ENCODE measurements at regions of chr17 and their contacts with region 1.

Region 1: DNA sequence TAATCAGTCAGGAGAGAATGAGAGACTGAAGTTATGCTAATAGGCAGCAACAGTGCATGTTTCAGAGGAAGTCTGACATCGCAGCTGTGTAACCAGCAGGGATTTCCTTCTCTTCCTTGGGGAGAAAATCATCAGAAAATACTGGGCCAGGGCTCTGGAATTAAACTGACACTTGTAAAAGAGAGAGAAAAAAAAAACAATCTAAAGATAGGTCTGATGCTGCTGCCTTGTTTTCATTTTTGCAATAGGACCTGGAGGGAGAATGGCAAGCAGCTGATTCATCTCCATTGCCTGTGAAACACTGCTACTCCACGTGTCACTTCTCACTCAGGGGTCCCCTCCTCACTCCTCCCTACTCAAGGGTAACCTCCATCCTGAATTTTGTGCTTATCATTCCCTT is 17.7 kb upstream of the CORO6 start:
- DNase-seq: peak; percentile 82
- H3K4me3 ChIP-seq: no peak overlapping the region
- H3K27ac ChIP-seq: peak overlapping the region; percentile 67
- H3K4me1 ChIP-seq: peaks cover 62% of the 10 kb centered on the region
- H3K27me3 ChIP-seq: no peaks in the 10 kb centered on the region
- CTCF ChIP-seq: no peak

Region 2: GRCh38 chr17:29326023-29326813 is 314.2 kb before region 1 on chr17:
- CTCF ChIA-PET with region 1: no interaction called
- POLR2A ChIA-PET with region 1: interaction called, 14 read pairs
- intact Hi-C with region 1: no loop called
- DNase-seq: no peak
- H3K4me3 ChIP-seq: no peak overlapping the region
- H3K27ac ChIP-seq: no peak overlapping the region
- H3K4me1 ChIP-seq: no peaks in the 10 kb centered on the region
- H3K27me3 ChIP-seq: no peaks in the 10 kb centered on the region
- CTCF ChIP-seq: no peak

Region 3: GRCh38 chr17:29611311-29612053 is 28.9 kb before region 1 on chr17:
- CTCF ChIA-PET with region 1: no interaction called
- POLR2A ChIA-PET with region 1: no interaction called
- intact Hi-C with region 1: no loop called
- DNase-seq: no peak
- H3K4me3 ChIP-seq: no peak overlapping the region
- H3K27ac ChIP-seq: no peak overlapping the region
- H3K4me1 ChIP-seq: peaks cover 17% of the 10 kb centered on the region
- H3K27me3 ChIP-seq: no peaks in the 10 kb centered on the region
- CTCF ChIP-seq: no peak

Region 4: GRCh38 chr17:29682054-29682453 is 41.6 kb after region 1 on chr17:
- CTCF ChIA-PET with region 1: no interaction called
- POLR2A ChIA-PET with region 1: interaction called, 7 read pairs
- intact Hi-C with region 1: loop called (anchors 5 kb)
- DNase-seq: peak; percentile 86
- H3K4me3 ChIP-seq: no peak overlapping the region
- H3K27ac ChIP-seq: peak overlapping the region; percentile 95
- H3K4me1 ChIP-seq: peaks cover 48% of the 10 kb centered on the region
- H3K27me3 ChIP-seq: no peaks in the 10 kb centered on the region
- CTCF ChIP-seq: peak; percentile 34

Region 5: GRCh38 chr17:29760761-29761696 is 120.6 kb after region 1 on chr17:
- CTCF ChIA-PET with region 1: no interaction called
- POLR2A ChIA-PET with region 1: interaction called, 6 read pairs
- intact Hi-C with region 1: loop called (anchors 5 kb)
- DNase-seq: peak; percentile 95
- H3K4me3 ChIP-seq: peak overlapping the region; percentile 79
- H3K27ac ChIP-seq: peak overlapping the region; percentile 76
- H3K4me1 ChIP-seq: peaks cover 46% of the 10 kb centered on the region
- H3K27me3 ChIP-seq: no peaks in the 10 kb centered on the region
- CTCF ChIP-seq: no peak

Region 6: GRCh38 chr17:29777663-29778062 is 137.2 kb after region 1 on chr17:
- CTCF ChIA-PET with region 1: interaction called, 49 read pairs
- POLR2A ChIA-PET with region 1: no interaction called
- intact Hi-C with region 1: loop called (anchors 1 kb)
- DNase-seq: no peak
- H3K4me3 ChIP-seq: no peak overlapping the region
- H3K27ac ChIP-seq: peak overlapping the region; percentile 71
- H3K4me1 ChIP-seq: peaks cover 44% of the 10 kb centered on the region
- H3K27me3 ChIP-seq: no peaks in the 10 kb centered on the region
- CTCF ChIP-seq: no peak

Region 7: GRCh38 chr17:29807520-29808351 is 167.3 kb after region 1 on chr17:
- CTCF ChIA-PET with region 1: interaction called, 17 read pairs
- POLR2A ChIA-PET with region 1: no interaction called
- intact Hi-C with region 1: no loop called
- DNase-seq: peak; percentile 81
- H3K4me3 ChIP-seq: no peak overlapping the region
- H3K27ac ChIP-seq: no peak overlapping the region
- H3K4me1 ChIP-seq: no peaks in the 10 kb centered on the region
- H3K27me3 ChIP-seq: no peaks in the 10 kb centered on the region
- CTCF ChIP-seq: peak; percentile 84

Region 8: GRCh38 chr17:30031214-30031869 is 390.9 kb after region 1 on chr17:
- CTCF ChIA-PET with region 1: no interaction called
- POLR2A ChIA-PET with region 1: no interaction called
- intact Hi-C with region 1: loop called (anchors 5 kb)
- DNase-seq: no peak
- H3K4me3 ChIP-seq: no peak overlapping the region
- H3K27ac ChIP-seq: no peak overlapping the region
- H3K4me1 ChIP-seq: peaks cover 31% of the 10 kb centered on the region
- H3K27me3 ChIP-seq: peaks cover 3% of the 10 kb centered on the region
- CTCF ChIP-seq: no peak

Measured in A673 (cell line).